ENCODE measurements at regions of chr4 and their contacts with region 1.

Region 1: GRCh38 chr4:77385124-77385969 is 220.3 kb upstream of the CXCL13 start:
- DNase-seq: peak; percentile 71
- H3K4me3 Mint-ChIP-seq: no peak overlapping the region
- H3K27ac Mint-ChIP-seq: no peak overlapping the region
- H3K4me1 Mint-ChIP-seq: peaks cover 2% of the 10 kb centered on the region
- H3K27me3 Mint-ChIP-seq: no peaks in the 10 kb centered on the region

Region 2: DNA sequence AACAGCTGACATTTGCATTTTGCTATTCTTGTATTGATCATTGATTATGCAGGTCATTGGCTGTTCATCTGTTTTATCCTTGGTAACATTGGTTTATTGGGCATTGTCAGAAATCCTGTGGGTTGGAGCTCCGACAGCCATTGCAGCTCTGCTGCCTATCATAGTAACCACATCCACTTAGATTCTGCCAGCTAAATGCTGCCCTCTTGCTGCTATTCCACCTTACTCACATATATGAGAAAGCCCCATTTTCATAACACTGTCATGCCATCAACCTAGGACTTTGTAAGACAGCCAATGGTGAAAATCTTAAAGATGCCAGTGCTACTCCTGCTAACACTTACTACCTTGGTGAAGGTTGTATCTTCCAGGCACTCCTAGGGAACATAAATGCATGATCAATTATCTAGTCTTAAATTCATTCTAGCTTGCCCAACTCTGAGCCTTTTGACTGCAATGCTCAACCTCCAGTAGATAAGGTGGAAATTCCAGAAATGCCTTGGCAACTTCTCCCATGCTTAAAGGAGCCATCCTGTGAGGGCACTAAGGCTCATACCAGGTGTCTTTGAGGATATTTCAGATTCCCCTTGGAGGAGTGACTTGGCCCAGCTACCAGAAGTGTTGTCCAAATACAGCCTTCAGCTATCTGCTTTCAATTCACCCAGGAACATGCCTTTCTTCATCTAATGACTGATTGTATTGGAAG is 33.1 kb after region 1 on chr4:
- CTCF ChIA-PET with region 1: interaction called, 25 read pairs
- POLR2A ChIA-PET with region 1: no interaction called
- intact Hi-C with region 1: loop called (anchors 1 kb)
- DNase-seq: no peak
- H3K4me3 Mint-ChIP-seq: no peak overlapping the region
- H3K27ac Mint-ChIP-seq: no peak overlapping the region
- H3K4me1 Mint-ChIP-seq: no peaks in the 10 kb centered on the region
- H3K27me3 Mint-ChIP-seq: peaks cover 5% of the 10 kb centered on the region

Region 3: DNA sequence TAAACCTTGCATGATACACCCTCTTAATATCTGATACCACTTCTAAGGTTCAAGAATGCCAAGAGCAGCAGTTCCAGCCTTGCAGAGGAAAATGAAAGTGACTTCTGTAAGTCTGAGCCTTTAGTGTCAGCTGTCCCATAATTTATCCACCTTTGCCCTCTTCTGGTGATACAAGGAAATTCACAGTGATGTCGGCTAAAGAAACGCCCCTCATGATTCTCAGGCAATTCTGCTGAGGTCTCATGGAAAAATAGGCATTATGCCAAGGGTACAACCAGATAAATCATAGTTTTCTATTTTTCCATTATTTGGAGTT is 48.0 kb after region 1 on chr4:
- CTCF ChIA-PET with region 1: interaction called, 25 read pairs
- POLR2A ChIA-PET with region 1: no interaction called
- intact Hi-C with region 1: loop called (anchors 1 kb)
- DNase-seq: peak; percentile 10
- H3K4me3 Mint-ChIP-seq: no peak overlapping the region
- H3K27ac Mint-ChIP-seq: no peak overlapping the region
- H3K4me1 Mint-ChIP-seq: peaks cover 14% of the 10 kb centered on the region
- H3K27me3 Mint-ChIP-seq: no peaks in the 10 kb centered on the region

Region 4: DNA sequence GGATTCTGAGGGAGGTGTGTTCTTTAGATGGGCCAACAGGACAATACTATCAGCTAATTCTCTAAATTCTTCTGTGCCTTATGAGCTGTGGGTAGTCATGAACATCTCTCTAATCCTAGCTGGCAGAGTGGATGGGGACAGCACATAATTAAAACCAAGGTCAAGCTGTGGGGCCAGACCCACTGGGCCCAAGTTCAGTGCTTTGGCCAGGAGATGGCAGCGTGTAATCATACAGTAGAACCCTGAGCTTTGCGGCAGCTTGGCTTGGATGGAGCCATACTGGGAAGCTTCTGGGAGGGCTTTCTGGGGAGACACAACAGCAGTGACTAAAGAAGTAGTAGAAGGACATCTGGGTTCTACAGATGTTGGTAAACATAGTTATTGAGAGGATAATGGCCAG is 79.9 kb after region 1 on chr4:
- CTCF ChIA-PET with region 1: interaction called, 10 read pairs
- POLR2A ChIA-PET with region 1: no interaction called
- intact Hi-C with region 1: no loop called
- DNase-seq: peak; percentile 53
- H3K4me3 Mint-ChIP-seq: no peak overlapping the region
- H3K27ac Mint-ChIP-seq: no peak overlapping the region
- H3K4me1 Mint-ChIP-seq: no peaks in the 10 kb centered on the region
- H3K27me3 Mint-ChIP-seq: peaks cover 14% of the 10 kb centered on the region

Region 5: DNA sequence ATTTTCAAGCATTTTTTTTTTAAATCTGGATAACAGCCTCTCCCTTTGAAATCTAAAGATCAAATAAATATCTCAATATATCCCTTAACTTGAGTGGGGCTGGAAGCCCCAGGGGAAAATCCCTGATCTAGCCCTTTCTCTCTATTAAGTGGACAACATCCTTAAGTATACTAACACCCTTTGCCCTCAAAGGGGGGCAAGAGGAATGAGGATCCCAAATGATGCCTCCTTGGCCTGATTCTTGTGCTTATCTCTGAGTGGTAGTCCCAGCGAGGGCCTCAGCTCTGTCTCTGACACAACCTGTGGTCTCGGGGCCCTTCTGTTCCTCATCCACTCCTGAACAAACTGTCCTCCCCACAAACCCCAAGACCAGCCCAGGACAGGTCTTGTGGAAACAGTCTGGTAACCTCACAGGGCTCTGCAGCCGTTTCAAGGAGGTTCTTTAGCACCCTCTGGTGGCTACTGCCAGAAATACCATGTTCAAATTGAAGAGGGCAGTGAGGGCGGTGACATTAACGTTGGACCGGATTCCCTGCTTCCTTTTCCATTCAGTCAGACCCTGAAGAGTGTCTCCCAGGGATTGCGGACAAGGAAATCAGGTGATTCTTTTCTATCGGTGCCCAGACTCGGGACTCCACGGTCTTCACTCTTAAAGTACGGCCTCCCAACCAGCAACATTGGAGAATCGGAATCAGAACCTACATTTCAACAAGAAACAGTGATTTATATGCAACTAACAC is 233.2 kb after region 1 on chr4:
- CTCF ChIA-PET with region 1: interaction called, 45 read pairs
- POLR2A ChIA-PET with region 1: no interaction called
- intact Hi-C with region 1: loop called (anchors 1 kb)
- DNase-seq: peak; percentile 71
- H3K4me3 Mint-ChIP-seq: no peak overlapping the region
- H3K27ac Mint-ChIP-seq: no peak overlapping the region
- H3K4me1 Mint-ChIP-seq: peaks cover 5% of the 10 kb centered on the region
- H3K27me3 Mint-ChIP-seq: peaks cover 15% of the 10 kb centered on the region

Region 6: GRCh38 chr4:78517050-78517652 is 1131.8 kb after region 1 on chr4:
- CTCF ChIA-PET with region 1: no interaction called
- POLR2A ChIA-PET with region 1: no interaction called
- intact Hi-C with region 1: loop called (anchors 5 kb)
- DNase-seq: no peak
- H3K4me3 Mint-ChIP-seq: no peak overlapping the region
- H3K27ac Mint-ChIP-seq: no peak overlapping the region
- H3K4me1 Mint-ChIP-seq: no peaks in the 10 kb centered on the region
- H3K27me3 Mint-ChIP-seq: peaks cover 6% of the 10 kb centered on the region